CD4-positive, alpha-beta memory T cell (primary cell): ENCODE measurements at regions of chr22 and their contacts with region 1.

Region 1: DNA sequence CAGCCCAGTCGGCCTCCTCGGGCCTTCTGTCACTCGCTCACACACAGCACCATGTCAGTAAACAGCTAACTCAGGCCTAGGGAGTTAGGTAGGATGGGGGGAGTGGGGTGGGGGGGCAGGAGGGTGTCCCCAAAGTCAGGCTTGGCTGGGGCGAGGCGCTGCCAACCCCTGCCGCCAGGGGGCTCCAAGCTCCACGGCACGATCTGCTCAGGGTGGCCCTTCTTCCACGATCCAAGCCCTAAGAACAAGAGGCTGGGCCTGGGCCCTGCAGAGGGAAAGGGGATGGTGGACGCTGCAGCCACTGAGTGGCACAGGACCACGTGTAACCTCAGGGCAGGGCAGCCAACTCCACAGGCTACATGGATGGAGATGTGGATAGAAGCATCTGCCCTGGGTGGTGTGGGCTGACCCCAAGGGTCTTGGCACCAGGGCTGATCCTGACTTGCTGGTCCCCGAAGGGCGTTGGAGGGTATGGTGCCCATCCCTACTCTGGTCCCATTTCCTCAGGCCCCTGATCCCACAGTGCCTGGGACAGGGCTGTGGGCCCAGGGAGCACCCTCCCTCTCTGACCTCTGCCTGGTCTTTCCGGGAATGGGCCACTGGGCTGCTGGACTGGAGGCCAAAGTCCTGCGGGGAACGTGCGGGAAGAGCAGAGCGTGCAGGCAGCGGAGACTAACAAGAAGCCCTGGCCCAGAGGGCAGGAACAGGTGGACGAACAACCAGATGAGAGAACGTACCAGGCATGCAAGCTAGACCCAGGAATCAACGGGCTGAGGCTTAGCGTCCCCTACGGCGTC is 29.1 kb upstream of the TXNRD2 start:
- DNase-seq: peak; percentile 64 to 79 (median 69)
- H3K4me3 ChIP-seq: no peak overlapping the region
- H3K4me3 Mint-ChIP-seq: no peak overlapping the region
- H3K27ac ChIP-seq: no peak overlapping the region
- H3K27ac Mint-ChIP-seq: no peak overlapping the region
- H3K4me1 ChIP-seq: peaks cover 12% of the 10 kb centered on the region
- H3K4me1 Mint-ChIP-seq: peaks cover 0 to 7% (median 5%) of the 10 kb centered on the region in 4 donors
- H3K27me3 ChIP-seq: no peaks in the 10 kb centered on the region
- H3K27me3 Mint-ChIP-seq: no peaks in the 10 kb centered on the region

Region 2: DNA sequence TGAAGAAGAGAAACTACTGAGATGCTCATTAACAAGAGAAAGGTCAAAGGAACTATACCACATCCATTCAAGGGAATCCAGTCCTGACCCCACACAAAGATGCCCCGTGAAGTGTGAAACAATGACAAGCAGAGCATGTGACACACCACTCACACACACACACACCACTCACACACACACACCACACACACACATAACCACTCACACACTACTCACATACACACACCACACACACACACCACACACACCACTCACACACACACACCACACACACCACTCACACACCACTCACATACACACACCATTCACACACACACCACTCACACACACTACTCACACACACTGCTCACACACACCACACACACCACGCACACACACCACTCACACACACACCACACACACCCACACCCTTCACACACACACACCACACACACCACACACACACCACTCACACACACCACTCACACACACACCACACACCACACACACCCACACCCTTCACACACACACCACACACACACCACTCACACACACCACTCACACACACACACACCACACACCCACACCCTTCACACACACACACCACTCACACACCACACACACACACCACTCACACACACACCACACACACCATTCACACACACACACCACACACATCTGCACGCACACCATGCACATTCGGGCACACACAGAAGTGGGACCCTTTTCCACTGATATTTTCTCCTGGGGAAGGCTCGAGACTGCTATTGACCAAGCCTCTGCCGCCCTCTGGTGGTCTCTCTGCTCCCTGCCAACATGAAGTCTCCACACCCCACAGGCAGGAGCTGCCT is 61.1 kb before region 1 on chr22:
- CTCF ChIA-PET with region 1: no interaction called
- POLR2A ChIA-PET with region 1: no interaction called
- intact Hi-C with region 1: no loop called
- DNase-seq: peak; percentile 73 to 77 (median 76)
- H3K4me3 ChIP-seq: no peak overlapping the region
- H3K4me3 Mint-ChIP-seq: peak overlapping the region in 2 of 8 donors; percentile 13 to 53
- H3K27ac ChIP-seq: no peak overlapping the region
- H3K27ac Mint-ChIP-seq: peak overlapping the region in 6 of 7 donors; percentile 22 to 92 (median 71)
- H3K4me1 ChIP-seq: peaks cover 7% of the 10 kb centered on the region
- H3K4me1 Mint-ChIP-seq: peaks cover 2 to 6% (median 5%) of the 10 kb centered on the region in 4 donors
- H3K27me3 ChIP-seq: no peaks in the 10 kb centered on the region
- H3K27me3 Mint-ChIP-seq: no peaks in the 10 kb centered on the region

Region 3: DNA sequence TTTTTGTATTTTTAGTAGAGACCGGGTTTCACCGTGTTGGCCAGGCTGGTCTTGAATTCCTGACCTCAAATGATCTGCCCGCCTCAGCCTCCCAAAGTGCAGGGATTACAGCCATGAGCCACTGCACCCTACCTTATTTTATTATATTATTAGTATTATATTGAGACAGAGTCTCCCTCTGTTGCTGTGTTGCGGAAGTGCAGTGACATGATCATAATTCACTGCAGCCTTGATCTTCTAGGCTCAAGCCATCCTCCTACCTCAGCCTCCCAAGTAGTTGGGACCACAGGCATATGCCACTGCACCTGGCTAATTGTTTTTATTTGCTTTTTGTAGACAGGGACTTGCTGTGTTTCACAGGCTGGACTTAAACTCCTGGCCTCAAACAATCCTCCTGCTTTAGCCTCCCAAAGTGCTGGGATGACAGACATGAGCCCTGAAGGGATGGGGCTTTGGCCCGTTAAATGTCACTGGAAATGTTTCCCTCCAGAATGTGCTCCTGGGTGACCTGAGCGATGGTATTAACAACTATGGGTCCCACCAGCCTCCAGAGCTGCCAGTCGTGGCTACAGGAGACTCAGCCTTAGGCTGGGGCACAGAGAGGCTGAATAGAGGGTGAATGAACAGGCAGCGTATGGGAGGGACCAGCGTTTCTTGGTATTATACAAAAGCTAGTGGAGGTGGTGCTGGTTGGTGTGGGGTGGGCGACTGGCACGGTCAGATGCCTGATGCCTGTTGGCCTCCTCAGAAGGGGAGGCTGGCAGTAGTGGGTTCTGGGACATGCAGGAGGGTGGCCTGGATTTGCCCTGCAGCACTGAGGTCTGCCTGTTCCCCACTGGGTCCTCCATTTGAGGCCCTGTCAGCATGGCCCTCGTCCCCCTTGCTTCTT is 57.5 kb after region 1 on chr22:
- CTCF ChIA-PET with region 1: interaction called, 3 read pairs
- POLR2A ChIA-PET with region 1: no interaction called
- intact Hi-C with region 1: loop called (anchors 1 kb)
- DNase-seq: no peak
- H3K4me3 ChIP-seq: no peak overlapping the region
- H3K4me3 Mint-ChIP-seq: no peak overlapping the region
- H3K27ac ChIP-seq: no peak overlapping the region
- H3K27ac Mint-ChIP-seq: no peak overlapping the region
- H3K4me1 ChIP-seq: peaks cover 52% of the 10 kb centered on the region
- H3K4me1 Mint-ChIP-seq: peaks cover 21 to 53% (median 36%) of the 10 kb centered on the region in 4 donors
- H3K27me3 ChIP-seq: no peaks in the 10 kb centered on the region
- H3K27me3 Mint-ChIP-seq: no peaks in the 10 kb centered on the region

Region 4: DNA sequence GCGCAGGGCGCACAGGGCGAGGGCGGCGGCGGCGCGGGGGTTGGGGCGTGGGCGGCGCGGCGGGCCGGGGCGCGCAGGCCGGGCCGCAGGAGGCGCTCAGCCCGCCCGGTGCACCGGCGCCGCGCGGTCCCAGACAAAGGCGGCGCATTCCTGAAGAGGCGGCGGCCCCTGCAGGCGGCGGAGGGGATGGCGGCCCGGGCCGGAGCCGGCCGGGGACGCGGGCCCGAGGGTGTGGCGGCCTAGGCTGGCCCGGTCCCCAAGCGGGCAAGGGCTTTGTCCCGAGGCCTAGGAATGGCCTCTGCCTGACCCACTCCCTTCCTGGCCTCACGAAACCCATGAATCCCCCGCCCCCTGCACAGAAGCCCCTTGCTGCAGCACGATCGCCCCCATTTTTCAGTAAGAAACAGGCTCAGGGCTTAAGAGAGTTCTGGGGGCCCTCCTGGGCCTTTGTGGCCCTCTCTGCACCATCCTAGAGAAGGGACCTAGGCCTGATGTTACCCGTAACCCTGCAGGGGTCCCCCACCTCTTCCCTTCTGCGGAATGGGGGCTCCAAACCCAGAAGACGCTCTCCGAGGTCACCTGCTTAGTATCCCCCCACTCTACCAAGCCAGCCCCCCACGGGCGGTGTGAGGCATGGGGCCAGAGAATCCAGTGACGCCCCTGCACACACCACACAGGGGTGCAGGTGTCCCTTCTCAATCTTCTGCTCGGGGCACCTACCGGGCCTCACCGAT is 297.8 kb after region 1 on chr22 and contains the start of gene RTN4R:
- CTCF ChIA-PET with region 1: no interaction called
- POLR2A ChIA-PET with region 1: no interaction called
- intact Hi-C with region 1: loop called (anchors 2 kb)
- DNase-seq: peak; percentile 38 to 59 (median 46)
- H3K4me3 ChIP-seq: no peak within 1 kb of the TSS
- H3K4me3 Mint-ChIP-seq: peak within 1 kb of the TSS; percentile 68 to 84 (median 78)
- H3K27ac ChIP-seq: no peak within 1 kb of the TSS
- H3K27ac Mint-ChIP-seq: peak within 1 kb of the TSS in 3 of 7 donors; percentile 46 to 77 (median 74)
- H3K4me1 ChIP-seq: peaks cover 8% of the 10 kb centered on the region
- H3K4me1 Mint-ChIP-seq: peaks cover 0 to 12% (median 6%) of the 10 kb centered on the region in 4 donors
- H3K27me3 ChIP-seq: no peaks in the 10 kb centered on the region
- H3K27me3 Mint-ChIP-seq: peaks cover 0 to 1% of the 10 kb centered on the region in 2 donors
- total RNA-seq, gene RTN4R: 2.1 to 2.7 TPM

Region 5: GRCh38 chr22:20283674-20284066 is 313.0 kb after region 1 on chr22:
- CTCF ChIA-PET with region 1: no interaction called
- POLR2A ChIA-PET with region 1: no interaction called
- intact Hi-C with region 1: loop called (anchors 2 kb)
- DNase-seq: no peak
- H3K4me3 ChIP-seq: no peak overlapping the region
- H3K4me3 Mint-ChIP-seq: no peak overlapping the region
- H3K27ac ChIP-seq: no peak overlapping the region
- H3K27ac Mint-ChIP-seq: no peak overlapping the region
- H3K4me1 ChIP-seq: no peaks in the 10 kb centered on the region
- H3K4me1 Mint-ChIP-seq: peaks cover 0 to 2% (median 0%) of the 10 kb centered on the region in 4 donors
- H3K27me3 ChIP-seq: no peaks in the 10 kb centered on the region
- H3K27me3 Mint-ChIP-seq: peaks cover 0 to 2% of the 10 kb centered on the region in 2 donors